Activated CD8-positive, alpha-beta T cell treated with anti-CD3 and anti-CD28 coated beads, Interleukin-2, amount 10 ng/mL, durations not matched to agents 7 days and 5 days (primary cell): ENCODE measurements at regions of chr2 and their contacts with region 1.

Region 1: DNA sequence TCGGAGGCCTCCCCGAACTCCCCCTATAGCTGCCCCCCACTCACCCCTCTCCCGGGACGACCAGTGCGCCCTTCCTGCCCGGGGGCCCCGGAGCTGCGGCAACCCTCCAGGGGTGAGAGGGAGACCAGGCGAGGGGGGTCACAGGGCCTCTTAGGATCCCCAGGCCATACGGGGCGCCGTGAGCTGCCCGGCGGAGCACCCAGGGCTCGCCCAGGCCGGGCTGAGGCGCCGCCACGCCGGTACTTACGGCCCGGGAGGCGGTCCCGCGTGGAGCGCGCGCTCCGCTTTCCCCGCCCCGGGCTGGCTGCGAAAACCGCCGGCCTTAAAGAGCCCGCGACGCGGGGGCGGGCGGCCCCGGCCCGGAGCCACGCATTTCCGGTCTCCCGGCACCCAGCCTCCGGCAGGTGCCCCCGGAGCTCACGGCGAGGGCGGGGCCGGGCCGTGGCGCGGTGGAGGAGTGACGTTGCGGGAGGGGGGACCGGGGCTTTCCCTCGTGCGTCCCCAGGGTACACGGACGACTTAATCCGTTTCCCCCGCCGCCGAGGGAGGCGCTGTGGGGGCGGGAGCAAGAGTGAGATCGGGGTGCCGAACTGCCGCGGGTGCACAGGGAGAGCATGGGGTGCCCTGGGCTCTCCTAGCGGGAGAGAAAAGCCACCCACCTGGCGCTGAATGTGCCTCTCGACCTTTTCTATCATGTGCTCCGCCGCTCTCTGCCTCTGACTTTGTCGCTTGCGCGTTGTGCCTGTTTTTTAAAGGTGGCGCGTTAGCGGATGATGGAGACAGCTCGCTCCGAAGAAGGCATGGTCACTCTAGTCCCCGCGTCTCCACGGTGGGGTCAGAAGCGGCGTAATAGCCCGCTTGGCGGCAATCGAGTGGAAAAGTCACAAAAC is at the start of gene METTL21A:
- DNase-seq: peak; percentile 94
- ATAC-seq: peak; percentile 80
- H3K4me3 Mint-ChIP-seq: peak within 1 kb of the TSS; percentile 93
- H3K27ac Mint-ChIP-seq: peak within 1 kb of the TSS; percentile 95
- H3K4me1 Mint-ChIP-seq: peaks cover 58% of the 10 kb centered on the region
- H3K27me3 Mint-ChIP-seq: no peaks in the 10 kb centered on the region
- total RNA-seq, gene METTL21A: 22.9 TPM

Region 2: DNA sequence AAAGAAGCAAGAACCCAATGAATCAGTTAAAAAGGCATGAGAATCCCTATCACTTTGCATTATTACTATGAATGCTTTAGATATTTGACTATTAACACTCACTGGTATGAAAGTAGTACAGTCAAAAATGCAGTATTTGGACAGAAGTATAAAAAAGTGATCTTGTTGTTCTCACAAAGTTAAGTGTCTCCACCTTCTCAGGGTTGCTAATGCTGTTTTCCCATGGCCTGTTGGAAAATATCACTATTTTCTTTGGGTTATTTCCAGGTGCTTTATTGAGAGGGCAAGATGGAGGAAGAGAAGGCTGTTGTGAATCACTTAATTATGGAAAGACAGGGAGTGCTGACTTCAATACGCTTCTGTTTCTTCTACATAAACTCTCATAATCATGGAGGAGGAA is 109.1 kb before region 1 on chr2:
- CTCF ChIA-PET with region 1: no interaction called
- POLR2A ChIA-PET with region 1: no interaction called
- DNase-seq: no peak
- ATAC-seq: no peak
- H3K4me3 Mint-ChIP-seq: no peak overlapping the region
- H3K27ac Mint-ChIP-seq: no peak overlapping the region
- H3K4me1 Mint-ChIP-seq: peaks cover 16% of the 10 kb centered on the region
- H3K27me3 Mint-ChIP-seq: no peaks in the 10 kb centered on the region

Region 3: GRCh38 chr2:207529330-207530159 is 95.7 kb before region 1 on chr2 and contains the start of gene CREB1:
- CTCF ChIA-PET with region 1: interaction called, 15 read pairs
- POLR2A ChIA-PET with region 1: interaction called, 60 read pairs
- DNase-seq: peak; percentile 99
- ATAC-seq: peak; percentile 90
- H3K4me3 Mint-ChIP-seq: peak within 1 kb of the TSS; percentile 90
- H3K27ac Mint-ChIP-seq: peak within 1 kb of the TSS; percentile 99
- H3K4me1 Mint-ChIP-seq: peaks cover 48% of the 10 kb centered on the region
- H3K27me3 Mint-ChIP-seq: peaks cover 15% of the 10 kb centered on the region
- total RNA-seq, gene CREB1: 87.6 to 103 TPM

Region 4: DNA sequence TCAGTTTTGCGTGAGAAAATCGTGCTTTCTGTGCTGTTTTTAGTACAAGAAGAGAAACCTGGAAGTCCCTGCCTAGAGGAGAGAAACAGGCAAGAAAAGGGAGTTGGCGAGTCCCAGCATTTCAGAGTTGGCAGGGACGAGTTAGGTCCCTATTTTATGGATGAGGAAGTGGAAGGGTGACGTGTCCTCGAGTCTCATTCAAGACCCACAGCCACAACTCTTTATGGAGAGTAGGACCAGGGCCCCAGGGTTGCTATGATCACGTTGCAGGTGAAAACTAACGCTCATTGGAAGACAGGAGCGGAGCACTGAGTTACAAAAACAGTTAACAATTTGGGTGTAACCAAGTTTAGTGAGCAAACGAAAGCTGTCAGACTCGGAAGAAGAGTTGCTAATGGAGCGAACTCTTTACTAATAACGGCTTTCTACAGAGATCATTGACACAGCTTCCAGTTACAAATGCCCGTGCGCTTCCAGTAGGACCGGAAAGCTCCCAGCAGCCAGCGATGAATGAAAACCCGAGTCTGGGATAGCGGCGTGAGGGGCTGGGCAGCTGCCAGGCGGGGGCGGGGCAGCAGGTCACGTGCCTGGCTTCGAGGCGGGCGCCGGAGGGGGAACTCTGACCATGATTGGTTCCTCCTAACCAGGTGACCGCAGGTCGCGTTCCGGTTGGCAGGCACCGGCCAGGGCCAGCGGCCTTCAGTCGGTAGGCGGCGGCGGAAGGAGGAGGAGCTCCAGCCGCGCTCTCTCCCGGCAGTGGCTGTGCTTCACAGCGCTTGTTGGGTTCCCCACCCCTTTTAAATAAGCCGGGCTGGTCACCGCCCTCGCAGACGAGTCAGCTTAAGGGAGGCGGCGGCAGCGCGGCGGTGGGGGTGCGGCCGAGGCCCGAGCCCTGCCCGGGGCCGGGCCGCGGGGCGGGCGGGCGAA is 85.8 kb after region 1 on chr2 and contains the start of gene CCNYL1:
- CTCF ChIA-PET with region 1: interaction called, 7 read pairs
- POLR2A ChIA-PET with region 1: interaction called, 20 read pairs
- DNase-seq: peak; percentile 99
- ATAC-seq: peak; percentile 99
- H3K4me3 Mint-ChIP-seq: peak within 1 kb of the TSS; percentile 87
- H3K27ac Mint-ChIP-seq: peak within 1 kb of the TSS; percentile 80
- H3K4me1 Mint-ChIP-seq: peaks cover 27% of the 10 kb centered on the region
- H3K27me3 Mint-ChIP-seq: no peaks in the 10 kb centered on the region
- total RNA-seq, gene CCNYL1: 6.1 to 6.3 TPM

Region 5: DNA sequence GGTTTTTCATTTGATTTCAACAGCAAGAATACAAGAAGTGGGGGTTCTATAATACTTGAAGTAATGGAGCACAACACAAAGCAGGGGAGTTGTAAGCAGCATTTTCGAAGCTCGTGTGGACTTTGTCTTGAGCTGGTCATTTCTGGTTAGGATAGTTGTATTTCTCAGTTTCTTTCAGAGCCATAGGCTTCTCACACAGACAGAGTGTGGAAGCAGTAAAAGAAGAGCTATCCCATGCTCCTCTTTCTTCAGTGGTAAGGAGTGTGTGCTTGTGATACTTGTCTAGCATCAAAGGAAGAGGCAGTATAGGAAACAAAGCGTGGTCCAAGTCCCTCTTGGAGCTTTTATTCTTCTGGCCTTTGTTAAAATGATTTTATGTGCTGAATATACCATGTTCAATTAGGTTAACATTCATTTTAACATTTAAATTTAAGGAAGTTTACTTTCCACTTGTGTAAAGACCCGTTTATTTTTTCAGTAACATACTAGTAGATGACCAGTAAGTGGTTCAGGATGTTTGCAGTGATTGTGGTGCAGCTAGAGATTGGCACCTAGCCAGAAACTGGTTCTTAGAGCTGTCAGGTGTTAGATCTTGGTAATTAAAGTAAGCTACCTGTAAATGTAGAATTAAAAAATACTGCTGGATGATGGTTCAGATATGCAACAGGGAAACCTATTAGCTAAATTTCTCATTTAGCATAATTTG is 100.8 kb after region 1 on chr2:
- CTCF ChIA-PET with region 1: interaction called, 20 read pairs
- POLR2A ChIA-PET with region 1: no interaction called
- DNase-seq: no peak
- ATAC-seq: no peak
- H3K4me3 Mint-ChIP-seq: no peak overlapping the region
- H3K27ac Mint-ChIP-seq: no peak overlapping the region
- H3K4me1 Mint-ChIP-seq: peaks cover 15% of the 10 kb centered on the region
- H3K27me3 Mint-ChIP-seq: no peaks in the 10 kb centered on the region

Region 6: DNA sequence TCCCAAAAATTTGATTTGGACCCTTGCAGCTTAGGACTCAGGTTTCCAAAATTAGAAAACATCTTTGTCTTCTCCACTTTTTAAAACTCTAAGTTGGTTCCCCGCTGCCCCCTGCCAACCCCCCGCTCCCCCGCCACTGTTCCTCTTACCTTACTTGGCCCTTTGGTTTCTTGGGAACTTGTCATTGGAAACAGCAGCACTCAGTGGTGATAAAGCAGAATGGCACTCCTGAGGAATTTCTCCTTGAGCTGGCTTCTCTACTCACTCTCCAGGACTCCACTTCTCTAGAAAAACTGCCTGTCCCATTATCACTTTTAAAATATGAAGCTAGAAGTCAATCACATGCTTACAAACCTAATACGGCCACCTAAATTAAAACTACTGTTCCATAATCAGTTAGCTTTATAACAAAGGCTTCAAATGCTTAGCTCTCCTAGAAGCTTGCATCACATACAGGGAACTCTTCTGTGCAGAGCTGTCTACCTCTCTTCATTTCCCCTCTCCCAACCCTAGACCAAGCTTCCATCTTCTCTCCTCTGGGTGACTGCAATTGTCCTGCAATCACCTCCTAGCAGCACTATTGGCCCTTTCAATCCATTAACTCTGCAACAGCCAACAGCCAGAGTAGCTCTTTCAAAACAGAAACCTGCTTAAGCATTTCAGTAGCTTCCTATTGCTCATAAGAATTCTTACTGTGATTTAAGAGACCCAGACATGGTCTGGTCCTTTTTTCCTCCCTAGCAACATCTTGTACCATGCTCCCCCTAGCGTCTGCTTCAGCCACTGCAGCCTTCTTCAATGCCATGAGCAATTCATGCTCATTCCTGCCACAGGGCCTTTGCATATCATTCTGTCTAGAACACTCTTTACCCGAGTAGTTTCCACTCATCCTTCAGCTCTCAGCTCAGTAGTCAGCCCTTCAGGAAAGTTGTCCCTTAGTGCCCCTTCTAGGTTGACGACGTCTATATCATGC is 415.2 kb after region 1 on chr2:
- CTCF ChIA-PET with region 1: interaction called, 12 read pairs
- POLR2A ChIA-PET with region 1: no interaction called
- DNase-seq: peak; percentile 82
- ATAC-seq: peak; percentile 77
- H3K4me3 Mint-ChIP-seq: no peak overlapping the region
- H3K27ac Mint-ChIP-seq: no peak overlapping the region
- H3K4me1 Mint-ChIP-seq: no peaks in the 10 kb centered on the region
- H3K27me3 Mint-ChIP-seq: no peaks in the 10 kb centered on the region